Ascending aorta (tissue), 2 donors: ENCODE measurements at regions of chr20 and their contacts with region 1.

Region 1: DNA sequence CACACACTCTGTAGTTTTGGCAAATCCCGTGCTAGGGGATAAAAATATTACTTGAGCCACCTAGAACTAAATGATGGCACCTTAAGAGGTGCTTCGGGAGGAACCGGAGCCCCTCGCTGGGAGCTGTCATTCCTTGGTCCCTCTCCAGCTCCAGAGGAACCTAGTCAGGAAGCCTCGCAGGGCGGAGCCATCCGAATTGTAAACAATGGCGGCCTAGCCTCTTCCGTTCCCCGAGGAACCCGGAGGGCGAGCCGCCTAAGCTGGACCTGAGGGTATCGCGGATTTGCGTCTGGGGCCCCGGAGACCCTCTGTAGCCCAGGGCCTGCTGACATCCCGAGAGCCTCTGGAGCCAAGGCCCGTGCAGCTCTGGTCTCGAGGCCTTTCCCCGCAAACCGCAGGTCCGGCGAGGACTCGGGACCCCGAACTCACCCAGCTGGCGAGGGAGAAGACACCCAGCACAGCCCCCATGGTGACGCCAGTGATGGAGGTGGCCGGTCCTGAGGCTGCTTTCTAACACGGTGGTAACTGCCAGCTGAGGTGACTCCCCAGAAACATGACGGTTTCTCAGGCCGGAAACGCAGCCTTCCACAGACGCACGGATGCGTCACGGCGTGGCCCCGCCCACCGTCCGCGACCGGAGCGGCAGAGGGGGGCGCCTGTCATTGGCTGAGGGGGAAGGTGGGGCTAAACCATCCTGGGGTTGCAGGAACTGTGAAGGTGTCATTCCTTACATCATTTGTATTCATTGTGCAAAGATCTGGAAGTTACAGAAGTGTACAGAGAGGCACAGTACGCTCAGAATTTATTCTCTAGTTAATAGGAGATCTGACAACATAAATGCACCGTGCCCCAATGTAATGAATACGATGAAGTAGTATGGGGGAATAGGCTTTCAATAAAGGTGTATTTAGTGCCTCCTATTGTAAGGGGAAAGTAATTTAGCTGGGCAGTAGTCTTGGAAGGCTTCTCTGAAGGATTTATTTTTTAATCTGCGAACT is at the start of gene SERINC3:
- DNase-seq: peak; percentile 91 to 99
- H3K4me3 ChIP-seq: peak within 1 kb of the TSS; percentile 70 to 89
- H3K27ac ChIP-seq: peak within 1 kb of the TSS; percentile 94 to 99
- H3K4me1 ChIP-seq: peaks cover 9 to 35% of the 10 kb centered on the region in 2 donors
- H3K27me3 ChIP-seq: no peaks in the 10 kb centered on the region
- CTCF ChIP-seq: peak in 1 of 3 experiments; percentile 23
- total RNA-seq, gene SERINC3: 78.1 TPM

Region 2: GRCh38 chr20:44104798-44105517 is 416.8 kb before region 1 on chr20:
- intact Hi-C with region 1: no loop called
- DNase-seq: peak in 1 of 2 donors; percentile 56
- H3K4me3 ChIP-seq: no peak overlapping the region
- H3K27ac ChIP-seq: no peak overlapping the region
- H3K4me1 ChIP-seq: no peaks in the 10 kb centered on the region
- H3K27me3 ChIP-seq: no peaks in the 10 kb centered on the region
- CTCF ChIP-seq: no peak

Region 3: GRCh38 chr20:44475694-44476560 is 45.9 kb before region 1 on chr20 and contains the start of gene TTPAL:
- intact Hi-C with region 1: loop called (anchors 1 kb)
- DNase-seq: peak; percentile 50 to 94
- H3K4me3 ChIP-seq: peak within 1 kb of the TSS; percentile 74 to 84
- H3K27ac ChIP-seq: peak within 1 kb of the TSS; percentile 94 to 97
- H3K4me1 ChIP-seq: peaks cover 5 to 6% of the 10 kb centered on the region in 2 donors
- H3K27me3 ChIP-seq: no peaks in the 10 kb centered on the region
- CTCF ChIP-seq: peak in 2 of 3 experiments; percentile 25 to 60
- total RNA-seq, gene TTPAL: 44.9 TPM

Region 4: GRCh38 chr20:44540834-44541233 is 19.1 kb after region 1 on chr20:
- intact Hi-C with region 1: no loop called
- DNase-seq: no peak
- H3K4me3 ChIP-seq: no peak overlapping the region
- H3K27ac ChIP-seq: no peak overlapping the region
- H3K4me1 ChIP-seq: no peaks in the 10 kb centered on the region
- H3K27me3 ChIP-seq: no peaks in the 10 kb centered on the region
- CTCF ChIP-seq: no peak

Region 5: DNA sequence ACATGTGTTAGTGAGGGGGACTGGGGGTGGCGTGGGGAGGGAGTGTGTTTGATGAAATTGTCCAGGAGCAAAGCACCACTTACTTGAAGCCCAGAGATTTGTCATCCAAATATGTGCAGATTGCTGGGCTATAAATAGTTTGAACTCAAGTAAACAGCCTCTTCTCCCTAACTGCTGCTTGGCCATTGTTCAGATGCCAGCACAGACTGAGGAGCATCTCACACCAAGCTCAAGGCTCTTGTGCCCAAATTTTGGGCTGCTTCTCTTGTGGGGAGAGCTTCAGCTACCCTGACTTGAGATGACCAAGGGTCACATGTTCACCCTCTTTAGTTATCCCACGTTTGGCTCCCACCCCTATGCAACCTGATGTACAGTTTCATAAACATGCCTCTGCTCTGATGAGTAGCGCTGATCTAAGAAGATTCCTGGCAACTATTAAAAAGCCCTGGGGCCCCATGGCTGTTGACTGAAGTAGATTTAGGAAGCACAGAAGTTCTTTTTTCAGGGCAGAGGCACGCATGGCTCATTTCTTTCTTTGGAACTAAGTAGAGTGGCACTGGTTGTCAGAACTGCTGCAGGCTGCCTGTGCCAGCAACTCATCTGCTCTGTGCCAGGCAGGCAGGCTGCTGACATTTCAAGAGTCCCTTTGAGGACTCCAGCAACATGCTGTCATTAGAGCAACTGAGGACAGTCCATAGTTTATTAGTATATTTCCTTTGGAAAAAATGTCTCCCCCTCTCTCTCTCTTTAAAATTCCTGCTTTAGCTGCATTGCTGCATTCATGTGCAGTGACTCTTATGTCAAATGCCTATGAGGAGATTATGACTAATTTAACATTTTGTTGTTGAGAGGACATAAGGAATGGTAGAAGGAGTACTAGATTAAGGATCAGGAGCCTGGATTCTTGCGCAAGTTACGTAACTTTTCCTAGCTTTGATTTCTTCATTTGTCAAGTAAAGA is 51.0 kb after region 1 on chr20:
- intact Hi-C with region 1: loop called (anchors 5 kb)
- DNase-seq: peak in 1 of 2 donors; percentile 80
- H3K4me3 ChIP-seq: peak overlapping the region in 1 of 2 donors; percentile 29
- H3K27ac ChIP-seq: peak overlapping the region; percentile 81 to 84
- H3K4me1 ChIP-seq: peaks cover 0 to 16% of the 10 kb centered on the region in 2 donors
- H3K27me3 ChIP-seq: no peaks in the 10 kb centered on the region
- CTCF ChIP-seq: no peak

Region 6: GRCh38 chr20:44609511-44610312 is 87.9 kb after region 1 on chr20:
- intact Hi-C with region 1: loop called (anchors 2 kb)
- DNase-seq: peak in 1 of 2 donors; percentile 95
- H3K4me3 ChIP-seq: peak overlapping the region; percentile 15 to 51
- H3K27ac ChIP-seq: peak overlapping the region; percentile 83 to 88
- H3K4me1 ChIP-seq: peaks cover 5 to 20% of the 10 kb centered on the region in 2 donors
- H3K27me3 ChIP-seq: no peaks in the 10 kb centered on the region
- CTCF ChIP-seq: peak; percentile 98

Region 7: DNA sequence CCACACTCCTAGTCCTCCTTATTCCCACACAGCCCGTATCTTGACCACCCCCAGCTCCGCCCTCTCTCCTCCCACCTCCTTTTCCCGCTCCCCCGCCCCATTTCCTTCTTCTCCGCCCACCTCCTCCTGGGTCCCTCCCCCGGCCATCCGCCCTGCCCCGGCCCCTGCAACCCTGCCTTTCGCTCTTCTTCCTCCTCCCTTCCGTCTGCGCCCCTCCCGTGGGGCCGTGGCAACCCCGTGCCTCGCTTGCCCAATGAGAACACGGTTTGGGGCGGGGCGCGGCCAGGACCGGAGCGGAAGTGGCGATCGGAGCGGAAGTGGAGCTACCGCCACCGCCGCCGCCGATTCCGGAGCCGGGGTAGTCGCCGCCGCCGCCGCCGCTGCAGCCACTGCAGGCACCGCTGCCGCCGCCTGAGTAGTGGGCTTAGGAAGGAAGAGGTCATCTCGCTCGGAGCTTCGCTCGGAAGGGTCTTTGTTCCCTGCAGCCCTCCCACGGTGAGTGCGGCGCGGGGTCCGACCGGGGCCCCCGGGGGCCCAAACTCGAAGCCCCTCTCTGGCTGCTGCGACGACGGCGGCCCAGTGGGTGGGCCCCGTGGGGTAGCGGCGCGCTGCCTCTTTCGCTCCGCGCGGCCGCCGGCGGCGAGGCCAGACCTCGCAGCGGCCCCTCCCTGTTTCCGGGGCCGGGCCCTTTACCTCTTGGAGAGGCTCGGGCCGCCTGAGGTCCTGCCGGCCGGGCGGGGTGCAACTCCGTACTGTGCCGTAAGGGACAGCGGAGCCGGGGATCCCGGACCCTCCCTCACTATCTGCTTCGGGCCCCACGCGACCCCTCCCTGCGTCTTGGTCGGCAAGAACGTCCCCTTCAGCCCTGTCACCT is 363.8 kb after region 1 on chr20 and contains the start of gene YWHAB:
- intact Hi-C with region 1: loop called (anchors 5 kb)
- DNase-seq: peak; percentile 96 to 99
- H3K4me3 ChIP-seq: peak within 1 kb of the TSS; percentile 78 to 91
- H3K27ac ChIP-seq: peak within 1 kb of the TSS; percentile 96 to 97
- H3K4me1 ChIP-seq: peaks cover 0 to 28% of the 10 kb centered on the region in 2 donors
- H3K27me3 ChIP-seq: no peaks in the 10 kb centered on the region
- CTCF ChIP-seq: no peak
- total RNA-seq, gene YWHAB: 50.4 TPM